Activated CD4-positive, alpha-beta memory T cell treated with anti-CD3 and anti-CD28 coated beads, Interleukin-2, amount 10 ng/mL, durations not matched to agents 7 days and 5 days (primary cell): ENCODE measurements at regions of chr4 and their contacts with region 1.

Region 1: DNA sequence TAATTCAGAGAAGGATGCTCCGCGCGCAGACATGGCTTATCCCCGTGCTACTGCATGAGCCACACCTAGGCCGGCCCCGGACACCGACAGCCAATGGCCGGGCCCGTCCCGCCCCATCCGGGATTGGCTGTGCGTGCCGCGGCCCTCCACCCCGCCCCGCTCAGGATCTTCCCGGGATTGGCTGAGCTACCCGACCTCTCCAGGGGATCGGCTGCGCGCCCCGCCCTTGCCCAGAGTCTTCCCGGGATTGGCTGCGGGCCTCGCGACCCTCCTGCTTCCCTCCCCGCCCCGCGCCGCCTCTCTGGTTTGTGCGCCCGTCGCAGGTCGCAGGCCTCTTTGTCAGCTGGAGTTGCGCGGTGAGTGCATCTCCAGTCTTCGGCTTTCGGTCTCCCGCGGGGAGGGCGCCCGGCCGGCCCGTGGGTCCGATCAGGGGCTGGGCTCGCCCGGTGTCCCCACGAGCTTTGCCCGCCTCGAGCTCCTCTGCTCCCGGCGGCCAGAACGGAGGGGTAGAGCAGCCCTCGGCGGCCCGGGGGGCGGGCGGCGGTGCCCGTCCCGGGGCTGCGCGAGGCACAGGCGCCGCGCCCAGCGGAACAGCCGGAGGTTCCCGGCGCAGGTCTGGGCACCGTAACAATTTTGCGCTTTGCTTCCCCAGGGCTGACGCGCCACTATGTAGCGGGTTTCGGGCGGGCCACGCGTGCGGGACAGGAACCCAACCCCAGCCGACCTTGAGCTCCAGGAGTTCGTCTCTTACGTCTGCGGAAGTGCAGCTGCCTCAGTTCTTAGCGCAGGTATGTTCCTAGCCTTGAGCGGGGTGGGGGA is 38.8 kb downstream of the ERVMER34-1 start:
- DNase-seq: peak; percentile 98
- H3K4me3 Mint-ChIP-seq: peak overlapping the region; percentile 90
- H3K27ac Mint-ChIP-seq: peak overlapping the region; percentile 93
- H3K4me1 Mint-ChIP-seq: peaks cover 59% of the 10 kb centered on the region
- H3K27me3 Mint-ChIP-seq: no peaks in the 10 kb centered on the region

Region 2: DNA sequence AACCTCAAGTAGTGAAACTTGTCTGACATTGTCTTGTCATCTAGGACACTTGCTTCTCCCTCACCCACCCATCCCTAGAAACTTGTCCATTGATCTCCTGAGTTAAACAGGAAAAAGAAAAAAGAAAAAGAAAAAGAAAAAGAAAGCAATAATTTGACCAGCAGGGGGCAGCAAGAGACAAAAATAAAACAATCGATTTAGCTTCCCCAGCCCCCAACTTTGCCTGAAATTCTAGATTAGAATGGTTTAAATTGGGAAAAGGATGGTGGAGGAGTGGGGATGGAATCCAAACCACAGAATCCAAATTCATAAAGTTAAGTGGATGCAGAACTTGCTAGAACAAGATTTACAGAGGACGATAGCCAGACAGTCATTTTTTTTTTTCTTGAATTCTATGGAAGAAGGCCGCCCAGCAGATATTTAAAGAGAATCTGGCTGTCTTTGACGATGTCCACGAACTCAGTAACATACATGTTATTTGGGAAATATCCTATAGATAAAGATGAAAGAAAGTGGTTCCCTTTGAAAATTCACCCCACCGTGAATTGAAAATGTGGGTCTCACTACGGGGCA is 336.2 kb before region 1 on chr4:
- CTCF ChIA-PET with region 1: no interaction called
- POLR2A ChIA-PET with region 1: no interaction called
- DNase-seq: no peak
- H3K4me3 Mint-ChIP-seq: no peak overlapping the region
- H3K27ac Mint-ChIP-seq: no peak overlapping the region
- H3K4me1 Mint-ChIP-seq: no peaks in the 10 kb centered on the region
- H3K27me3 Mint-ChIP-seq: peaks cover 11% of the 10 kb centered on the region

Region 3: GRCh38 chr4:52588097-52588782 is 124.1 kb before region 1 on chr4:
- CTCF ChIA-PET with region 1: interaction called, 22 read pairs
- POLR2A ChIA-PET with region 1: interaction called, 24 read pairs
- DNase-seq: peak; percentile 36
- H3K4me3 Mint-ChIP-seq: no peak overlapping the region
- H3K27ac Mint-ChIP-seq: peak overlapping the region; percentile 81
- H3K4me1 Mint-ChIP-seq: peaks cover 40% of the 10 kb centered on the region
- H3K27me3 Mint-ChIP-seq: peaks cover 4% of the 10 kb centered on the region

Region 4: DNA sequence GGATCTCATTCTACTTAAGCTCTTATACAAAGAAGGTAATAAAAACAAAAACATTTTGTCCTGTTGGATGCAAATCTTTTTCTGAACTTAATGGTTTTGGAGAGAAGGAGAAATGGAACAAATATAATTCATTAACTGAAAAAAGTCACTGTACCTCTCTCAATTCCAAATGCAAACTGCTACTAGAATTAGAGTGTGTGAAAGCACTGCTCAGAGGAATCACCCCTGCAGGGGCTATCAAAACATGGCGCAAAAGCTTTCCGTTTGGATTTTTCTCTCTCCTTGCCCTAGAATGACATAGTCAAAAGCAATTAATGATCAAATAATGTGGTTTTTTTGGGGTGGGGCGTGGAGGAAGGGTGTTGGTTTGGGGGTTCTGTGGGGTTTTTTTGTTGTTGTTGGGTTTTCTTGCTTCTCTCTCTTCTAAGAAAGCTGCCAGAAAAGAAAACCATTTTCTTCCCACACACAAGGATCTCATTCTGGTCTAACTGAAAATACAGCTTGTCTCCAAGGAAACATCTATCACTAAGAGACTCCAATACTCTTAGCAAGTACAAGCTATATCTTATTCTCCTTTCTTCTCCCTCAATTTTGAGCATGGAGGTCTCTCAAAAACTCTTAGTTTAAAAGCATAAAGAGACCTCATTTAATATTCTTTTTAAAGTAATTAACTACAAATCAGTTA is 94.9 kb before region 1 on chr4:
- CTCF ChIA-PET with region 1: interaction called, 4 read pairs
- POLR2A ChIA-PET with region 1: interaction called, 25 read pairs
- DNase-seq: peak; percentile 30
- H3K4me3 Mint-ChIP-seq: no peak overlapping the region
- H3K27ac Mint-ChIP-seq: peak overlapping the region; percentile 58
- H3K4me1 Mint-ChIP-seq: peaks cover 38% of the 10 kb centered on the region
- H3K27me3 Mint-ChIP-seq: no peaks in the 10 kb centered on the region

Region 5: DNA sequence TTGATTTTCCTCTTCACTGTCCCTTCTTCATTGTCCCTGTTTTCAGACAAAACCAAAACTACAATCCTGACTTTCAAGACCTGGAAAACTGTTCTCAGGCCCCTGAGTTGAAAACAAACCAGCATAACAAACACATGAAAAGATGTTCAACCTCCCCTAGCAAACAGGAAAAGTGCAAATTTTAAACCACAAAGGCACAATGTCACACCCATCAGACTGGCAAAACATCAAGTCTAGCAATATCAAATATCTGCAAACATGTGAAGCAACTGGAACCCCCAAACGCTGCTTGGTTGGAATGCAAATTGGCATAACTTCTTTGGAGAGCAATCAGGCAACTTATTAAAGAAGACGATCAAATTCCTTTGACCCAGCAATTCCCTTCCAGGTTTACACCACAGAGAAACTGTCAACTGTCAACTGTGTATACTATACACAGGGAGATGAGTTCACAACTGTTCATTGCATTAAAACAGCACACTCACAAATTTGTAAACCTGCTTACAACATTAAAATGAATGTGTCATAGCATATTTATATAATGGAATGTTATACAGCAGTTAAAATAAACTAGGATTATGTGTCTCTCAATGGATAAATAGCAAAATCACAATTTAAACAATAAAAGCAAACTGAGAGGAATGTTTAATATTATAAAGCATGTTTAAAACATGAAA is 60.2 kb before region 1 on chr4:
- CTCF ChIA-PET with region 1: interaction called, 3 read pairs
- POLR2A ChIA-PET with region 1: interaction called, 61 read pairs
- DNase-seq: no peak
- H3K4me3 Mint-ChIP-seq: peak overlapping the region; percentile 4
- H3K27ac Mint-ChIP-seq: peak overlapping the region; percentile 55
- H3K4me1 Mint-ChIP-seq: peaks cover 37% of the 10 kb centered on the region
- H3K27me3 Mint-ChIP-seq: no peaks in the 10 kb centered on the region

Region 6: DNA sequence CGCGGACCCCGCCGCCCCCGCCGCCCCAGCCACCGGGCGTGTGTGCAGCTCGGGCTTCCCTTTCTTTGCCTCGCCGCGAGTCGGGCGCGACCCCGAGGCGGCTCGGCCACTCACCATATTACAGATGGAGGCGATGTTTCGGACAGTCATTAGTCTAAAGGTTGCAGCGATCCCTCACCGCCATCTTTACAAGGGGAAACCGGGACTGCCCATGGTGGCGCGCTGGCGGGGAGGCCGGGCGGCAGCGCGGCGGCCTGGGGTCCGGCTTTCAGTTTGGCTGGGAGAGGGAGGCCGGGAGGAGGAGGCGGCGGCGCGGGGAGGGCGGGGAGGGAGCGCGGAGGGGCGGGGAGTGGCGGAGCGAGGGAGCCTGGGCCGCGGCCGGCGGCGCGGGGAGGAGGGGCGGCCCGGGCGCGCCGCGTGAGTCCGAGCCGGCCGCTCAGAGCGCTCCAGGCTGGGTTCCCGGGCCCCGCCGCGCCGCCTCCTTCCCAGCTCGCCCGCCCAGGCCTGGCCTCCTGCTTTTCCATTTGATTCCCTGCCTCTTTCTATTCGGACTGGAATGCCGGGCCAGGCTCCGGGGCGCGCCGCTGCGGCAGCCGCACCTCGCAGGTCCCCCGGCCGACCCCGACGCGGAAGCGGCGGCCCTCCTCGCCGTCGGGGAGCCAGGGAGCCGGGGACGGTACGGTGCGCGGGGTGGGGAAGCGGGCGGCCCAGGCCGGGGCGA is 53.2 kb before region 1 on chr4 and contains the start of gene USP46:
- CTCF ChIA-PET with region 1: interaction called, 3 read pairs
- POLR2A ChIA-PET with region 1: interaction called, 61 read pairs
- DNase-seq: peak; percentile 62
- H3K4me3 Mint-ChIP-seq: peak within 1 kb of the TSS; percentile 77
- H3K27ac Mint-ChIP-seq: peak within 1 kb of the TSS; percentile 67
- H3K4me1 Mint-ChIP-seq: peaks cover 28% of the 10 kb centered on the region
- H3K27me3 Mint-ChIP-seq: no peaks in the 10 kb centered on the region
- total RNA-seq, gene USP46: 13.1 to 15.0 TPM

Region 7: DNA sequence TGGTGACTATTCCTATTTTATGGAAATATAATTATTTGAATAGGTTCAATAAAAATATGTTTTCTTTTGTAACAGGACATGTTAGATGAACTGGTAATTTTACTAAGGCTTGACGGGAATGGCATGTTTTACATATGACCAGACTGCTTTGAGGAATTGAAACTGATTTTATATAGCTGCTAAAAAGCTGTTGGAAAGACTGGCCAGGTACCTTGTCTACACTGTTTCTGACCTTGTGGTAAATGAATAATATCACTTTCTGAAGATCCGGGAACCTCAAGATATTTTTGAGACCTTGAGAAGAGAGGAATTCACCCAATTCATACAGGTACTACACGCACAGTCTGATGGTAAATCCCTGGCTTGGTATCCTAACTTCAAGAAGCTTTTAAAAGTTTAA is 11.2 kb before region 1 on chr4:
- CTCF ChIA-PET with region 1: no interaction called
- POLR2A ChIA-PET with region 1: interaction called, 17 read pairs
- DNase-seq: no peak
- H3K4me3 Mint-ChIP-seq: no peak overlapping the region
- H3K27ac Mint-ChIP-seq: no peak overlapping the region
- H3K4me1 Mint-ChIP-seq: peaks cover 4% of the 10 kb centered on the region
- H3K27me3 Mint-ChIP-seq: peaks cover 5% of the 10 kb centered on the region

Region 8: GRCh38 chr4:52925531-52925968 is 213.2 kb after region 1 on chr4:
- CTCF ChIA-PET with region 1: no interaction called
- POLR2A ChIA-PET with region 1: no interaction called
- DNase-seq: no peak
- H3K4me3 Mint-ChIP-seq: no peak overlapping the region
- H3K27ac Mint-ChIP-seq: no peak overlapping the region
- H3K4me1 Mint-ChIP-seq: no peaks in the 10 kb centered on the region
- H3K27me3 Mint-ChIP-seq: no peaks in the 10 kb centered on the region